ENCODE measurements at regions of chr13 and their contacts with region 1.

Region 1: GRCh38 chr13:106349080-106349931 is 186.2 kb downstream of the EFNB2 start:
- DNase-seq: peak; percentile 94
- ATAC-seq: peak; percentile 88
- H3K4me3 ChIP-seq: peak overlapping the region; percentile 42 to 58
- H3K27ac ChIP-seq: peak overlapping the region; percentile 59
- H3K4me1 ChIP-seq: peaks cover 27 to 47% of the 10 kb centered on the region in 2 experiments
- H3K27me3 ChIP-seq: no peaks in the 10 kb centered on the region
- CTCF ChIP-seq: no peak
- POLR2A ChIP-seq: no peak
- RAD21 ChIP-seq: peak; percentile 23; the same call in 1 of the 2 replicates

Region 2: GRCh38 chr13:105918842-105919741 is 430.2 kb before region 1 on chr13:
- CTCF ChIA-PET with region 1: no interaction called
- POLR2A ChIA-PET with region 1: no interaction called
- RAD21 ChIA-PET with region 1: no interaction called
- intact Hi-C with region 1: loop called (anchors 10 kb)
- DNase-seq: peak; percentile 88
- ATAC-seq: peak; percentile 93
- H3K4me3 ChIP-seq: peak overlapping the region; percentile 19 to 48
- H3K27ac ChIP-seq: peak overlapping the region; percentile 75
- H3K4me1 ChIP-seq: peaks cover 22 to 40% of the 10 kb centered on the region in 2 experiments
- H3K27me3 ChIP-seq: no peaks in the 10 kb centered on the region
- CTCF ChIP-seq: no peak
- POLR2A ChIP-seq: peak; percentile 61
- RAD21 ChIP-seq: peak; percentile 41

Region 3: GRCh38 chr13:106100171-106100919 is 249.0 kb before region 1 on chr13:
- CTCF ChIA-PET with region 1: no interaction called
- POLR2A ChIA-PET with region 1: no interaction called
- RAD21 ChIA-PET with region 1: no interaction called
- intact Hi-C with region 1: loop called (anchors 10 kb)
- DNase-seq: peak; percentile 46
- ATAC-seq: peak; percentile 28
- H3K4me3 ChIP-seq: no peak overlapping the region
- H3K27ac ChIP-seq: peak overlapping the region; percentile 48
- H3K4me1 ChIP-seq: peaks cover 87 to 93% of the 10 kb centered on the region in 2 experiments
- H3K27me3 ChIP-seq: no peaks in the 10 kb centered on the region
- CTCF ChIP-seq: no peak
- POLR2A ChIP-seq: no peak
- RAD21 ChIP-seq: peak; percentile 5; the same call in 1 of the 2 replicates

Region 4: GRCh38 chr13:106143930-106144709 is 205.2 kb before region 1 on chr13:
- CTCF ChIA-PET with region 1: no interaction called
- POLR2A ChIA-PET with region 1: no interaction called
- RAD21 ChIA-PET with region 1: interaction called in 1 of 2 experiments, 3 read pairs
- intact Hi-C with region 1: loop called (anchors 10 kb)
- DNase-seq: peak; percentile 82
- ATAC-seq: peak; percentile 71
- H3K4me3 ChIP-seq: peak overlapping the region in 1 of 2 experiments; percentile 25; a peak in 2 of 4 replicates
- H3K27ac ChIP-seq: peak overlapping the region; percentile 73
- H3K4me1 ChIP-seq: peaks cover 48 to 57% of the 10 kb centered on the region in 2 experiments
- H3K27me3 ChIP-seq: no peaks in the 10 kb centered on the region
- CTCF ChIP-seq: no peak
- POLR2A ChIP-seq: no peak
- RAD21 ChIP-seq: peak; percentile 32; the same call in 1 of the 2 replicates

Region 5: DNA sequence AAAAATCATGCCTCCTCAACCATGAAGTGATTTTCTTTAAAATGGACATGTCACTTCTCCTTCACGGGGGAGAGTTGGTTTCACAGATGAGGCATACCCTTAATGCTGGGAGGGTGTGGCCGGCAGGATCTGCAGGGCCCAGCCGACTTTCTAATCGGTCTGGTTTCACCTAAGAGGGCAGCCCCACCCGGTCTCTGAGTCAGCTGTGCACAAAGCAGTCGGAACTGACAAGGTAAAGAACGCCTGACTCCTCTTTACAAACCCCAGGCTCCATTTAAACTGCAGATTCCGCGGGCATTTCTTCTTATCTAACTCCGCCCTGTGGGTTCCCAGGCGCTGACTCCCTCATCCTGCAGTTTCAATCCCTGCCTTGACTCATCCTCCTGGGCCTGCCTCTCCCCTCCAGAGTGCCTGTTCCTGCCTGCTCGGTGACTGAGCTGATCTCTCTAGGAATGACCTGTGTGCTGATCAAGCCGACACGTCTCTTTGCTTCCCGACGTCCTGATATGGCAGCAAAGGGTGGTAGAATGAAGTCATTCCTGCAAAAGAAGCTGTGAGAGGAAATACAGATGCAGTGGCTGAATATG is 122.7 kb after region 1 on chr13:
- CTCF ChIA-PET with region 1: no interaction called
- POLR2A ChIA-PET with region 1: no interaction called
- RAD21 ChIA-PET with region 1: no interaction called
- intact Hi-C with region 1: loop called (anchors 1 kb)
- DNase-seq: peak; percentile 95
- ATAC-seq: peak; percentile 98
- H3K4me3 ChIP-seq: peak overlapping the region; percentile 28 to 44
- H3K27ac ChIP-seq: peak overlapping the region; percentile 42; the same call in 1 of the 2 replicates
- H3K4me1 ChIP-seq: peaks cover 15 to 38% of the 10 kb centered on the region in 2 experiments
- H3K27me3 ChIP-seq: no peaks in the 10 kb centered on the region
- CTCF ChIP-seq: no peak
- POLR2A ChIP-seq: no peak
- RAD21 ChIP-seq: peak; percentile 37

Measured in HCT116 (cell line).